ENCODE measurements at regions of chr14 and their contacts with region 1.

Region 1: DNA sequence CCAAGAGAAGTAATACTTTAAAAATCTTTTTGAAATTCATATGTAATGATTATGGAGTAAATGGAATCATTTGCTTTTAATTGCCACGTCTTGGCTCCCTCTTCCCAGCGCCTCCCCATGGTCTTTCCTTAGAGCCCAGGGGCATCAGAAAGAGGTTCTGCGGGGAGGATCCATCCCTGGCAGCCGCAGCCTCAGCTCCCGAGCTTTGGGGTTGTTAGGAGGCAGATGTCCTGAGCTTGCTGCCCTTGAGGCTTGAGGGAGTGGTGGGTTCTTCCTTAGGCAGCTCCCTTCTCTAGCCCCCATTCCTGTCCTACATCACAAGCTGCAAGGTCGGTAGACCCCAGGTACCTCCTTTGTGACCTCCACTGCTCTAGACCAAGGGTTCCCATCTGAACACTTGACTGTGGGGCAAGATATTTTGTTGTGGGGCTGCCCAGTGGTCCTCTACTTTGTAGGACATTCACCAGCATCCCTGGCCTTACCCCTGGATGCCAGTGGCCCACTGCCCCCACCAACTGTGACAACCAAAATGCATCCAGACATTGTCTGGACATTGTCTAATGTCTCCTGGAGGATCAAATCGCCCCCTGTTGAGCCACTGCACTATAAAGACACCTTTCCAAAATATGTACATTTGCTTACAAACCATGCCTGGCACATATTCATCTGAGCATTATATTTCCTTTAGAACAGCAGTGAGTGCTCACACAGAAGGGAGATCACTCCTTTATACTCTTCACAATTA is 6.3 kb downstream of the PPP2R5C start:
- DNase-seq: no peak
- ATAC-seq: no peak
- H3K4me3 Mint-ChIP-seq: no peak overlapping the region
- H3K27ac Mint-ChIP-seq: no peak overlapping the region
- H3K4me1 Mint-ChIP-seq: peaks cover 39% of the 10 kb centered on the region
- H3K27me3 Mint-ChIP-seq: no peaks in the 10 kb centered on the region
- CTCF ChIP-seq: no peak

Region 2: GRCh38 chr14:101781240-101782061 is 13.7 kb after region 1 on chr14:
- CTCF ChIA-PET with region 1: interaction called, 14 read pairs
- POLR2A ChIA-PET with region 1: interaction called, 12 read pairs
- intact Hi-C with region 1: no loop called
- DNase-seq: peak; percentile 51
- ATAC-seq: peak; percentile 74
- H3K4me3 Mint-ChIP-seq: peak overlapping the region; percentile 70
- H3K27ac Mint-ChIP-seq: peak overlapping the region; percentile 48
- H3K4me1 Mint-ChIP-seq: peaks cover 36% of the 10 kb centered on the region
- H3K27me3 Mint-ChIP-seq: peaks cover 2% of the 10 kb centered on the region
- CTCF ChIP-seq: no peak

Region 3: GRCh38 chr14:101834800-101835547 is 67.2 kb after region 1 on chr14:
- CTCF ChIA-PET with region 1: interaction called, 10 read pairs
- POLR2A ChIA-PET with region 1: interaction called, 4 read pairs
- intact Hi-C with region 1: loop called (anchors 5 kb)
- DNase-seq: no peak
- ATAC-seq: no peak
- H3K4me3 Mint-ChIP-seq: no peak overlapping the region
- H3K27ac Mint-ChIP-seq: peak overlapping the region; percentile 80
- H3K4me1 Mint-ChIP-seq: peaks cover 85% of the 10 kb centered on the region
- H3K27me3 Mint-ChIP-seq: no peaks in the 10 kb centered on the region
- CTCF ChIP-seq: no peak

Region 4: DNA sequence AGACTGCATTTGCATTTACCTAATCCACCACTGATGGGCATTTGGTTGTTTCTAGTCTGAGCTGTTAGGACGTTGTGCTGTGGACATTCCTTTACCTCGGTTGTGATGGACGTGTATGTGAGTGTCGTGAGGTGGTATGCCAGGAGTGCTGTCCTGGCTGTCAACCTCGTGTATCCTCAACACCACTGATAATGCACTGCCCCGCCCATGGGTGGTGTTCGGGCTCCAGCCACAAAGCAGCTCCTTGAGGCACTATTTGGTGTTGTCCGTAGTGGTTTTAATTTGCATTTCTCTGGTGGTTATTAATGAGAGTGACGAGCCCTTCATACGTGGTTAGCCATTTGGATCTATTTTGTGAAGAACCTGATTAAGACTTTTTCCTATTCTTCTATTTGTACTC is 81.3 kb after region 1 on chr14:
- CTCF ChIA-PET with region 1: interaction called, 49 read pairs
- POLR2A ChIA-PET with region 1: interaction called, 3 read pairs
- intact Hi-C with region 1: loop called (anchors 5 kb)
- DNase-seq: no peak
- ATAC-seq: no peak
- H3K4me3 Mint-ChIP-seq: no peak overlapping the region
- H3K27ac Mint-ChIP-seq: peak overlapping the region; percentile 22
- H3K4me1 Mint-ChIP-seq: peaks cover 84% of the 10 kb centered on the region
- H3K27me3 Mint-ChIP-seq: no peaks in the 10 kb centered on the region
- CTCF ChIP-seq: no peak

Region 5: GRCh38 chr14:101889898-101890297 is 122.1 kb after region 1 on chr14:
- CTCF ChIA-PET with region 1: interaction called, 20 read pairs
- POLR2A ChIA-PET with region 1: no interaction called
- intact Hi-C with region 1: no loop called
- DNase-seq: no peak
- ATAC-seq: no peak
- H3K4me3 Mint-ChIP-seq: no peak overlapping the region
- H3K27ac Mint-ChIP-seq: peak overlapping the region; percentile 43
- H3K4me1 Mint-ChIP-seq: peaks cover 3% of the 10 kb centered on the region
- H3K27me3 Mint-ChIP-seq: no peaks in the 10 kb centered on the region
- CTCF ChIP-seq: no peak

Measured in activated CD8-positive, alpha-beta T cell treated with anti-CD3 and anti-CD28 coated beads for 36 hours (primary cell).